IMR-90 (cell line): ENCODE measurements at regions of chr1 and their contacts with region 1.

Region 1: DNA sequence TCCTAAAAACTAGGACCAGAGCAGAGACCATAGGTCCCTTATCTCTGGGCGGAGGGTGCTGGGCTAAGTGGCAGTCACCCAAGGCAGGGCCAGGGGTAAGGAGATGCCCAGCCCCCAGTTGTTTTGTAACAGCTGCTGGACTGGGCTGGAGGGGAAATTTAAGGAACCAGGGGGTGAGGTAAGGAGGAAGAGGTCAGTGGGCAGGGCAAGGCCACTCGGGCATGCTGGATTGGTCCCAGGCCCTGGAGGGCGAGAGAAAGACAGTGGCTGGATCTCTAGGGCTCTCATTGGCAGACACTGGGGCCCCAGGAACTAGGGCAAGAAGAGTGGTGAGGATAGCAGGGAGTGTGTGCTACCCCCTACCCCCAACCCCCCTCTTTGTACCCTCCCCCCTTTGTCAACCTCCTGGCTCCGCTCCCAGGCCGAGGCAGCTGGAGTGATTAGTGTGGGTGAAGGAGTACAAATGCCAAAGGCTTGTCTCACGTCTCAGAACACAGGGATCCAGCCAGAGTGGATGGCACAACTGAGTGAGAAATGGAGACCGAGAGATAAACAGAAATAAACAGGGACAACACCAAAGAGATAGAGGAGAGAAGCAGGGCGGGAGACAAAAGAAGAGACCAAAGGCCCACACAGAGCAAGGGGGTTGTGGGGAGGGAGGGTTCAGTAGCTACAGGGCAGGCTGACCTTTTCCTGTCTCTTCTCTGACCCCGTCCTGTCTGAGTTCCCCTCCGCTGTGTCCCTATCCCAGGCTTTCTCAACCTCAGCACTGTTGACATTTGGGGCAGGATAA is 20.5 kb upstream of the THRAP3 start:
- DNase-seq: peak; percentile 52
- ATAC-seq: peak; percentile 78
- H3K4me3 ChIP-seq: no peak overlapping the region
- H3K27ac ChIP-seq: peak overlapping the region; percentile 63; the same call in 1 of the 2 replicates
- H3K4me1 ChIP-seq: peaks cover 16% of the 10 kb centered on the region
- H3K27me3 ChIP-seq: no peaks in the 10 kb centered on the region
- CTCF ChIP-seq: no peak
- POLR2A ChIP-seq: no peak
- RAD21 ChIP-seq: no peak

Region 2: DNA sequence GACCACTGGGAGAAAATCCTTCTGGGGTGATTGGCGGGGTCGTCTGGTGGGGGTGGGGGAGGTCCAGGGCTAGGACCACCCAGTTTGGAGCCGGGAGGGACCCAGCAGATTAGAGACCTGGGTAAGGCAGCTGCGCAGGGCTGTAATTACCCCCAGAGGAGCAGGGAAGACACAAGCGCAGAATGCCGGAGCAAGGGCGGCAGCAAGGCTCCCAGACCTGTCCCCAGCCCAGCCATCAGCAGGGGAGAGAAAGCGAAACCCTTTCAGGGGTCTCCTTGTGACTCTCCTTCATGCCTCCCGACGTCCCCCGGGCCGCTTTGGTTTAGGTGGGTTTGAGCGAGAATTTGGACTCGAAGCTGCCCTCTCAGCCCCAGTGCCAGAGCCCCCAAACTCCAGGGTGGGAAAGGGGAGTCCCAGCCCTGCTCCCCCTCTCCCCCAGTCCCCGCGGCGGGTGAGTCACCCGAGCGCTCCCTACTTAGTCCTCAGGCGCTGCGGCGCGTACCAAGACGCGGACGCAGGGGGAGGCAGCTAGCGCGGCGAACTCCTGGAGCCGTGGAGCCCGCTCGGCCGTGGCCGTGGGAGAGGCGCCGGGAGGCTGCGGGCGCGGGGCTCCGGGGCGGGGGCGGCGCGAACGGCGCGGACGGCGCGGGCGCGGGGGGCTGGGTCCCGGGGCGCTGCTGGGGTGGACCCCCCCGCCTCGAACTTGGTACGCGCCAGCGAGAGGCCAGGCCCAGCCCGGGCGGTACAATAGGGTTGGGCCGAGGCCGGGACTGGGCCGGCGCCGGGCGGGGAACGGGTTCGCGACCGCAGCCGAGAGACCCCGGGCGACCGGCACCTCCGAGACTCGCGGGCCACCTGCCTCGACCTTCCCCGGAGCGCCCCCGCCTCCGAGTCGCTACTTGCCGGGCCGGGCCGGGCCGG is 48.1 kb before region 1 on chr1 and contains the start of gene MAP7D1:
- CTCF ChIA-PET with region 1: no interaction called
- POLR2A ChIA-PET with region 1: no interaction called
- dilution Hi-C with region 1: no loop called
- in situ Hi-C with region 1: no loop called
- intact Hi-C with region 1: loop called (anchors 5 kb)
- DNase-seq: peak; percentile 80
- ATAC-seq: peak; percentile 84
- H3K4me3 ChIP-seq: peak within 1 kb of the TSS; percentile 98
- H3K27ac ChIP-seq: peak within 1 kb of the TSS; percentile 97
- H3K4me1 ChIP-seq: peaks cover 29% of the 10 kb centered on the region
- H3K27me3 ChIP-seq: no peaks in the 10 kb centered on the region
- CTCF ChIP-seq: no peak
- POLR2A ChIP-seq: peak; percentile 90
- RAD21 ChIP-seq: no peak
- total RNA-seq, gene MAP7D1: 30.8 and 32.3 TPM in 2 replicates

Region 3: GRCh38 chr1:36170643-36171412 is 32.9 kb before region 1 on chr1:
- CTCF ChIA-PET with region 1: no interaction called
- POLR2A ChIA-PET with region 1: interaction called, 18 read pairs
- dilution Hi-C with region 1: no loop called
- in situ Hi-C with region 1: no loop called
- intact Hi-C with region 1: no loop called
- DNase-seq: no peak
- ATAC-seq: no peak
- H3K4me3 ChIP-seq: no peak overlapping the region
- H3K27ac ChIP-seq: no peak overlapping the region
- H3K4me1 ChIP-seq: peaks cover 9% of the 10 kb centered on the region
- H3K27me3 ChIP-seq: no peaks in the 10 kb centered on the region
- CTCF ChIP-seq: no peak
- POLR2A ChIP-seq: no peak
- RAD21 ChIP-seq: no peak